MCF 10A (cell line): ENCODE measurements at regions of chr1 and their contacts with region 1.

Region 1: DNA sequence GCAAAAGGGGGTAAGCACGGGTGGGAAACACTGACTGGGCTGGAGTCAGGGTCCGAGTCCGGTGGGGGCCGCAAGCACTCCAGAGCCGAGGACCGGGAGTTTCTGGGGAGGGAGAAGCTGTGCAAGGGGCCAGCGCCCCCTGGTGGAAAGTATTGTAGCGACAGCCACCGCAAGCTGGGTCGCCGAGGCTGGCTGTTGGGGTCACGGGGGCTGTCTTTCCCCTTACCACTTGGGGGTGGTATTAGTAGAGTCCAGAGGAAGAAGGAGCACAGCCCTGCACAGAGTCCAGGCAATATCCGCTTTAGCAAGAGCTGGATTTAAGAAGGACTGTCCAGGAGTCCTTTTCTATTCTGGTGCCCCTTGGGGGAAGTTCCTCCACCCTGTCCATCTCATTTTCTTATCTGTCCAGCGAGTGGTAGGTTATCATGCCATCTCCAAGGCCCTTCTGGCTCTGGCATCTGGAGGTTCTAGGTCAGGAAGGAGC is 17.9 kb upstream of the ETV3 start:
- DNase-seq: peak; percentile 78
- H3K4me3 Mint-ChIP-seq: peak overlapping the region; percentile 63
- H3K27ac Mint-ChIP-seq: peak overlapping the region; percentile 33
- H3K4me1 Mint-ChIP-seq: peaks cover 40% of the 10 kb centered on the region
- H3K27me3 Mint-ChIP-seq: no peaks in the 10 kb centered on the region
- CTCF ChIP-seq: peak; percentile 99

Region 2: GRCh38 chr1:156910309-156910782 is 245.8 kb before region 1 on chr1:
- CTCF ChIA-PET with region 1: interaction called, 6 read pairs
- POLR2A ChIA-PET with region 1: no interaction called
- intact Hi-C with region 1: loop called (anchors 10 kb)
- DNase-seq: peak; percentile 47
- H3K4me3 Mint-ChIP-seq: no peak overlapping the region
- H3K27ac Mint-ChIP-seq: no peak overlapping the region
- H3K4me1 Mint-ChIP-seq: peaks cover 19% of the 10 kb centered on the region
- H3K27me3 Mint-ChIP-seq: peaks cover 13% of the 10 kb centered on the region
- CTCF ChIP-seq: peak; percentile 99

Region 3: DNA sequence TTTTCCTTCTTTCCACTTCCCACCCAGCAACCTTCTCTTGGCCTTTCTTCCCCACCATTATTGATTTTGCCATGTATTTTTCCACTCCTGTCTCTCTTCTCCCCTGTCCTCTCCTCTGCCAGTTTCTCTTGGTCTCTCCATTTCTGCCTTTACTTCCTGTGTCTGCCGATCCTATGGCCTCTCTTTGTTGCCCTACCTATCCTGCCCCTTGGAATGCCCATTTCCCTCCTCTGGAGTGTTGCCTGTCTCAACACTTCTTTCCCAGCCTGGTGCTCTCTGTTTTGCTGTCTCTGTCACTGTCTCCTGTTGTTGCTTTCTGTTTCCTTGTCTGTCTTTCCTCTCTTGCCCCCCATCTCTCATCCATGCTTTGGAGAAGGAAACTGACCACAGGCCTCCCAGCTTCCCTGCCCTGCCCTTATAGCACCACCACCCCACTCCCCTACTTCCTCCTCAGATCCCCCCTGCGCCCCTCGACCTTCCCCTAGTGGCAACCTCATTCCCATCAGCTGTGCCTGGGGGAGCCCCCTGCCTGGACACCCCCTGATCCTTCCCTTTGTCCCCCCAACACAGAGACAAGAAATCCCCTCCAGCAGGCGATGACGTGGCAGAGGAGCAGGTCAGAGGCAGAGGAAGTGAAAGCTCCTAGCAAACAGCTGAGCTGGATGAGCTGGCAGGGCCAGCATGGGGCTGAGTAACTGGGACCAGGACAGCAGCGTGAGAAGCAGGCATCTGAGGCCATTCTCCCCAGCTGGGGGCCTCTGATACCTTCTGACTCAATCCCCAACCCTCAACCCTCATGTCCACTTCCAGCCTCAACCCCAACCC is 49.9 kb before region 1 on chr1:
- CTCF ChIA-PET with region 1: interaction called, 51 read pairs
- POLR2A ChIA-PET with region 1: no interaction called
- intact Hi-C with region 1: no loop called
- DNase-seq: peak; percentile 38
- H3K4me3 Mint-ChIP-seq: no peak overlapping the region
- H3K27ac Mint-ChIP-seq: no peak overlapping the region
- H3K4me1 Mint-ChIP-seq: peaks cover 9% of the 10 kb centered on the region
- H3K27me3 Mint-ChIP-seq: peaks cover 76% of the 10 kb centered on the region
- CTCF ChIP-seq: no peak

Region 4: DNA sequence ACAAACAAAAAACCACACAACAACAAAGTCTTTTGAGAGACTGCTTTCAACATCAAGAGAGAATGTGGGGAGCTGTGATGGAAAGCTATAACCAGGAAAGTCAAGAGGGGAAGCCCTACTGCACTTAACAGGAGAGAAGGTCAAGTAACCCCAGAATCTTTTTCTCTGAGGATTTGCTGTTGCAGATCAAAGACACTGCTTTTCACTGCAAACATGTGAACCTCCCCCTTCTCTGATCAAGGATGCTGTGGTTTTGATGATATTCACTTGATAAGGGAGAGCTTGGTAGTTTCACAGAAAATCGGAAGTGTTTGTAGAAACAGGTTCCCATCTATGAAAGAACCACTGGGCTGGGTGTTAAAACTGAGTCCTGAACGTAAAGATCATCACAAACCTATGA is 22.7 kb before region 1 on chr1:
- CTCF ChIA-PET with region 1: interaction called, 419 read pairs
- POLR2A ChIA-PET with region 1: interaction called, 64 read pairs
- intact Hi-C with region 1: loop called (anchors 1 kb)
- DNase-seq: no peak
- H3K4me3 Mint-ChIP-seq: no peak overlapping the region
- H3K27ac Mint-ChIP-seq: peak overlapping the region; percentile 16
- H3K4me1 Mint-ChIP-seq: peaks cover 36% of the 10 kb centered on the region
- H3K27me3 Mint-ChIP-seq: no peaks in the 10 kb centered on the region
- CTCF ChIP-seq: no peak

Region 5: DNA sequence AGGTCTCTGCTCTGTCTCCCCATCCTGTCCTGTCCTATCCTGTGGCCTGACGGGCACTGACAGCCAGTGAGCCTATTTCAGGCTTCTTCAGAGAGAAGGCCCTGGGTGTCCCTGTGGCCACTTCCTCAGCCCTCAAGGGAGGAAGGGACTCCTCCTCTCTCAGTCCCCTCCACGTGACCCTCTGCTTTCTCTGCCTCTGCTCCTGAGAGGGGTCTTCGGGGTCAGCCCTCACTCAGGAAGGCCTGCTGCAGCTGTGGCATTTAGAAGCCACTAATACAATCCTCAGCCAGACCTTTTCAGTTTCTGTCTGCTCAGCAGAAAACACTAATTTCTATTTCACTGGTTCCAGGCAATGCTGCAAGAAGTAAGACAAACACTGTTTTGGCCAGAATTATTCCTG is 25.7 kb after region 1 on chr1:
- CTCF ChIA-PET with region 1: interaction called, 24 read pairs
- POLR2A ChIA-PET with region 1: no interaction called
- intact Hi-C with region 1: no loop called
- DNase-seq: no peak
- H3K4me3 Mint-ChIP-seq: no peak overlapping the region
- H3K27ac Mint-ChIP-seq: no peak overlapping the region
- H3K4me1 Mint-ChIP-seq: no peaks in the 10 kb centered on the region
- H3K27me3 Mint-ChIP-seq: peaks cover 63% of the 10 kb centered on the region
- CTCF ChIP-seq: no peak

Region 6: DNA sequence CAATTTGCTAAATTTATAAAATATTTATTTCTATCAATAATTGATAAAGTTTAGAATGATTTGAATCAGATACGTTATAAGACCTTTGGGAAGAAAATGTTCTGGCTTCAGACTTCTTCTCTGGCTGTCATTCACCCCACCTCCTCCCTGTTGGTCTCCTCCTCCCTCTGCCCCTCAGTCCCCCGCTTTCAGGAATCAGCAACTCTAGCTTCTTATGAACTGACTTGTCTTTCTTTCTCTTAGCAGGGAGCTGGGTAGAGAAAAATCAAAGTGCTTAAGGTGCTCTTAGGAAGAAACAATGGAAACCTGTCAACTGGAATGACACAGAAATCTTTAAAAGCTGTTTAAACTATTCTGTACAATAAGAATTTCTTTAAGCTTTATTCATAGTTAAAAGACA is 53.4 kb after region 1 on chr1:
- CTCF ChIA-PET with region 1: no interaction called
- POLR2A ChIA-PET with region 1: no interaction called
- intact Hi-C with region 1: no loop called
- DNase-seq: no peak
- H3K4me3 Mint-ChIP-seq: no peak overlapping the region
- H3K27ac Mint-ChIP-seq: no peak overlapping the region
- H3K4me1 Mint-ChIP-seq: no peaks in the 10 kb centered on the region
- H3K27me3 Mint-ChIP-seq: peaks cover 67% of the 10 kb centered on the region
- CTCF ChIP-seq: no peak

Region 7: DNA sequence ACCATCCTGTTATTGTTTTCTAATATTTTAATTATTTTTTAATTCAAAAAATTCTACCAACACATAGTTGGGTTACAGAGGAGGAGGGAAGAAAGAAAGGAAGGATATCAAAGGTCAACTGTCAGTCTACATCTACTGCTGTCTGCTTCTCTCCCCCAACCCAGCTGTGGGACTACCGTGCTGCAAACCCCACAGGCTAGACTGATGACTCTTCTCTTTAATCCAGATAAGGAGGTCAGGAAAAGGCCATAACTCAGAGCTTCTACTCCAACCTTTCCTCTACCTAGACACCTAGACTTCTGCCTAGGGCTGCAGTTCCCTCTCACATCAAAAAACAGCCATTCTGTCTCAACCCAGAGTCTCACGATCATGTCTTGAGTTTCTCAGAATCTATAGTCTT is 106.3 kb after region 1 on chr1:
- CTCF ChIA-PET with region 1: no interaction called
- POLR2A ChIA-PET with region 1: no interaction called
- intact Hi-C with region 1: no loop called
- DNase-seq: no peak
- H3K4me3 Mint-ChIP-seq: no peak overlapping the region
- H3K27ac Mint-ChIP-seq: no peak overlapping the region
- H3K4me1 Mint-ChIP-seq: no peaks in the 10 kb centered on the region
- H3K27me3 Mint-ChIP-seq: peaks cover 31% of the 10 kb centered on the region
- CTCF ChIP-seq: no peak

Region 8: GRCh38 chr1:157496121-157496526 is 340.0 kb after region 1 on chr1:
- CTCF ChIA-PET with region 1: interaction called, 32 read pairs
- POLR2A ChIA-PET with region 1: no interaction called
- intact Hi-C with region 1: no loop called
- DNase-seq: peak; percentile 74
- H3K4me3 Mint-ChIP-seq: no peak overlapping the region
- H3K27ac Mint-ChIP-seq: no peak overlapping the region
- H3K4me1 Mint-ChIP-seq: peaks cover 5% of the 10 kb centered on the region
- H3K27me3 Mint-ChIP-seq: peaks cover 90% of the 10 kb centered on the region
- CTCF ChIP-seq: peak; percentile 95